Natural killer cell (primary cell): ENCODE measurements at regions of chr6 and their contacts with region 1.

Region 1: GRCh38 chr6:118565311-118565960 is 17.3 kb downstream of the PLN start:
- DNase-seq: peak in 1 of 2 donors; percentile 79
- ATAC-seq: peak; percentile 56 to 73 (median 65)
- H3K4me3 ChIP-seq: no peak overlapping the region
- H3K4me3 Mint-ChIP-seq: no peak overlapping the region
- H3K27ac ChIP-seq: no peak overlapping the region
- H3K27ac Mint-ChIP-seq: peak overlapping the region; percentile 25 to 35
- H3K4me1 ChIP-seq: no peaks in the 10 kb centered on the region
- H3K4me1 Mint-ChIP-seq: peaks cover 8 to 15% of the 10 kb centered on the region in 2 donors
- H3K27me3 ChIP-seq: no peaks in the 10 kb centered on the region
- H3K27me3 Mint-ChIP-seq: no peaks in the 10 kb centered on the region
- CTCF ChIP-seq: peak; percentile 31

Region 2: DNA sequence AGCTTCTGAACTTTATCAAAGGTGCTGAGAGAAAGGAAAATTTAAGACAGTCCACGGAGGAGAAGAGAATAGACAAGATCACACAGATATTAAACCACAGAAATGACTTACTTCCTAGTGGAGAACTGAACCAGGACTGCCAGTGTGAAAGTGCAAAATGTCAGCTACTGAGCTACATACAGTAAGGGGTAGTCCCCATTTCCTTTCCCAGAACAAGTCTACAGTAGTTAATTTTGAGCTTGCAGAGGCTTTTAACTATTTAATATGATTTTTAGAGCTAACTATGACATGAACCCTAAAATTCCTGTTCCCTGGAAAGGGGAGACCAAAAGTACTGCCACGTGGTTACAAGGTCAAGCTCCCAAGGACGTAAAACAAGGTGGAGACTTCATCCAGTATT is 40.8 kb after region 1 on chr6:
- intact Hi-C with region 1: no loop called
- DNase-seq: peak in 1 of 2 donors; percentile 6
- ATAC-seq: no peak
- H3K4me3 ChIP-seq: no peak overlapping the region
- H3K4me3 Mint-ChIP-seq: no peak overlapping the region
- H3K27ac ChIP-seq: no peak overlapping the region
- H3K27ac Mint-ChIP-seq: peak overlapping the region; percentile 19 to 44
- H3K4me1 ChIP-seq: no peaks in the 10 kb centered on the region
- H3K4me1 Mint-ChIP-seq: peaks cover 40 to 42% of the 10 kb centered on the region in 2 donors
- H3K27me3 ChIP-seq: no peaks in the 10 kb centered on the region
- H3K27me3 Mint-ChIP-seq: no peaks in the 10 kb centered on the region
- CTCF ChIP-seq: no peak

Region 3: GRCh38 chr6:118776607-118777549 is 211.4 kb after region 1 on chr6:
- intact Hi-C with region 1: loop called (anchors 1 kb)
- DNase-seq: peak; percentile 36 to 84
- ATAC-seq: peak; percentile 83 to 92 (median 85)
- H3K4me3 ChIP-seq: no peak overlapping the region
- H3K4me3 Mint-ChIP-seq: no peak overlapping the region
- H3K27ac ChIP-seq: no peak overlapping the region
- H3K27ac Mint-ChIP-seq: no peak overlapping the region
- H3K4me1 ChIP-seq: no peaks in the 10 kb centered on the region
- H3K4me1 Mint-ChIP-seq: peaks cover 6% of the 10 kb centered on the region in 2 donors
- H3K27me3 ChIP-seq: no peaks in the 10 kb centered on the region
- H3K27me3 Mint-ChIP-seq: peaks cover 0 to 3% of the 10 kb centered on the region in 2 donors
- CTCF ChIP-seq: peak; percentile 82

Region 4: GRCh38 chr6:118800394-118801071 is 235.1 kb after region 1 on chr6:
- intact Hi-C with region 1: loop called (anchors 10 kb)
- DNase-seq: peak; percentile 60 to 92
- ATAC-seq: peak; percentile 93 to 97 (median 95)
- H3K4me3 ChIP-seq: no peak overlapping the region
- H3K4me3 Mint-ChIP-seq: peak overlapping the region; percentile 71
- H3K27ac ChIP-seq: no peak overlapping the region
- H3K27ac Mint-ChIP-seq: peak overlapping the region; percentile 51 to 57
- H3K4me1 ChIP-seq: peaks cover 18% of the 10 kb centered on the region
- H3K4me1 Mint-ChIP-seq: peaks cover 16 to 21% of the 10 kb centered on the region in 2 donors
- H3K27me3 ChIP-seq: no peaks in the 10 kb centered on the region
- H3K27me3 Mint-ChIP-seq: no peaks in the 10 kb centered on the region
- CTCF ChIP-seq: peak; percentile 84